ENCODE measurements at regions of chr10 and their contacts with region 1.

Region 1: GRCh38 chr10:68156373-68157185 is 47.3 kb downstream of the MYPN start:
- DNase-seq: no peak
- ATAC-seq: peak; percentile 61
- H3K4me3 Mint-ChIP-seq: no peak overlapping the region
- H3K27ac Mint-ChIP-seq: no peak overlapping the region
- H3K4me1 Mint-ChIP-seq: no peaks in the 10 kb centered on the region
- H3K27me3 Mint-ChIP-seq: peaks cover 5% of the 10 kb centered on the region
- CTCF ChIP-seq: no peak

Region 2: GRCh38 chr10:67788025-67788886 is 368.3 kb before region 1 on chr10:
- CTCF ChIA-PET with region 1: interaction called, 43 read pairs
- POLR2A ChIA-PET with region 1: no interaction called
- intact Hi-C with region 1: loop called (anchors 1 kb)
- DNase-seq: peak; percentile 58
- ATAC-seq: peak; percentile 80
- H3K4me3 Mint-ChIP-seq: peak overlapping the region; percentile 52
- H3K27ac Mint-ChIP-seq: no peak overlapping the region
- H3K4me1 Mint-ChIP-seq: peaks cover 23% of the 10 kb centered on the region
- H3K27me3 Mint-ChIP-seq: no peaks in the 10 kb centered on the region
- CTCF ChIP-seq: no peak

Region 3: GRCh38 chr10:67861750-67862460 is 294.7 kb before region 1 on chr10:
- CTCF ChIA-PET with region 1: interaction called, 118 read pairs
- POLR2A ChIA-PET with region 1: no interaction called
- intact Hi-C with region 1: no loop called
- DNase-seq: no peak
- ATAC-seq: no peak
- H3K4me3 Mint-ChIP-seq: no peak overlapping the region
- H3K27ac Mint-ChIP-seq: no peak overlapping the region
- H3K4me1 Mint-ChIP-seq: peaks cover 23% of the 10 kb centered on the region
- H3K27me3 Mint-ChIP-seq: no peaks in the 10 kb centered on the region
- CTCF ChIP-seq: no peak

Region 4: GRCh38 chr10:67925449-67926005 is 231.1 kb before region 1 on chr10:
- CTCF ChIA-PET with region 1: interaction called, 3 read pairs
- POLR2A ChIA-PET with region 1: no interaction called
- intact Hi-C with region 1: loop called (anchors 5 kb)
- DNase-seq: no peak
- ATAC-seq: no peak
- H3K4me3 Mint-ChIP-seq: no peak overlapping the region
- H3K27ac Mint-ChIP-seq: no peak overlapping the region
- H3K4me1 Mint-ChIP-seq: no peaks in the 10 kb centered on the region
- H3K27me3 Mint-ChIP-seq: no peaks in the 10 kb centered on the region
- CTCF ChIP-seq: no peak

Region 5: GRCh38 chr10:68010426-68010940 is 146.1 kb before region 1 on chr10:
- CTCF ChIA-PET with region 1: interaction called, 9 read pairs
- POLR2A ChIA-PET with region 1: no interaction called
- intact Hi-C with region 1: loop called (anchors 10 kb)
- DNase-seq: no peak
- ATAC-seq: no peak
- H3K4me3 Mint-ChIP-seq: no peak overlapping the region
- H3K27ac Mint-ChIP-seq: no peak overlapping the region
- H3K4me1 Mint-ChIP-seq: no peaks in the 10 kb centered on the region
- H3K27me3 Mint-ChIP-seq: no peaks in the 10 kb centered on the region
- CTCF ChIP-seq: no peak

Region 6: DNA sequence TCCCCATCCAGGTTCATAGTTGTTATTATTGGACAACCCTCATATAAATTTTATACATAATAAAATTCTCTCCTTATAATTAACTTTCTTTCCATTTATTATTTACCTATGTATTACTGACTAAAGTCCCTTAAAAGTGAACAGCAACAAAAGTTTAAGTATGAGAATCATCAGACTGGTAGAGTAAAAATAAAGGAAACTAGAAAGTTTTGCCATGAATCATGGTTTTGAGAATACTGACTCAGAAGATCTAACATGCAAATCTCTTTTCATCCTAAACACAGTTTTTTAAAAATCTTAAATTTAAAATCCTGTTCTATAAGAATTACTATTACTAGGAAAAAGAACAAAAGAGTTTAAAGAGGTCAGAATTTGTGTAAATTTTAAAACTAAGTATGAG is 113.5 kb before region 1 on chr10:
- CTCF ChIA-PET with region 1: no interaction called
- POLR2A ChIA-PET with region 1: no interaction called
- intact Hi-C with region 1: no loop called
- DNase-seq: no peak
- ATAC-seq: no peak
- H3K4me3 Mint-ChIP-seq: no peak overlapping the region
- H3K27ac Mint-ChIP-seq: no peak overlapping the region
- H3K4me1 Mint-ChIP-seq: peaks cover 35% of the 10 kb centered on the region
- H3K27me3 Mint-ChIP-seq: no peaks in the 10 kb centered on the region
- CTCF ChIP-seq: no peak

Region 7: DNA sequence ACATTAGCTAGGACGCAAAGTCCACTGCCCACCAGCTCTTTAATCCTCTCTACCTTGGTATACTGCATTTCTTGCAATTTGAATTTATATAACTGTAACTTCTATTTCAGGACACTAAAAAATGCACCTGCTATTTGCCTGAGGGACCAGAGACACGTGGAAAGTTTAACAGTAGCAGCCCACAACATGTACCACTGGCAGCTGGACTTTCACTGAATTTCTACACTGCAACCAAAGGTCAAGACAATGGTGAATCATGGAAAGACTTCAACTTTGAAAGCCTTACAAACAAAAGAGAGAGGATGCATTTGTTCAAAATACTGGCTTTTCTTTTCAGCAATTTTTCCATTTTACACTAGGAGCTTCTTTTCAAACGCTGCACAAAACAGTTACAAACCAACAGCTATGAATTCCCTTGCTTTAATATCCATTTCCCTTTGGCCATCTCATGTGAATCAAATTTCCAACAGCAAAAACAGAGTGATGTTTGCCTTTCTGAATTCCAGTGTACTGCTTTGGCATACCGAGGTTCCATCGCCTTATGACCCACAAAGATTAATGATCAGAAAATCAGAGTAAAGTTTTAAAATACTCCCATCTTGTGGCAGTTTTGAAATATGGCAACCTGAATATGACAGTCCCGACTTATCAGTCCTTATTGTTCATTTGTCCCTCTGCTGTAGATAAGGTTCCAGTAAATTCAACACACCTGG is 145.4 kb after region 1 on chr10:
- CTCF ChIA-PET with region 1: interaction called, 22 read pairs
- POLR2A ChIA-PET with region 1: no interaction called
- intact Hi-C with region 1: loop called (anchors 1 kb)
- DNase-seq: no peak
- ATAC-seq: peak; percentile 62
- H3K4me3 Mint-ChIP-seq: no peak overlapping the region
- H3K27ac Mint-ChIP-seq: peak overlapping the region; percentile 90
- H3K4me1 Mint-ChIP-seq: peaks cover 31% of the 10 kb centered on the region
- H3K27me3 Mint-ChIP-seq: no peaks in the 10 kb centered on the region
- CTCF ChIP-seq: no peak